SK-N-SH (cell line): ENCODE measurements at regions of chr1 and their contacts with region 1.

Region 1: GRCh38 chr1:201970334-201971159 is 11.9 kb upstream of the RNPEP start:
- DNase-seq: peak; percentile 62
- H3K4me3 ChIP-seq: no peak overlapping the region
- H3K27ac ChIP-seq: no peak overlapping the region
- H3K4me1 ChIP-seq: no peaks in the 10 kb centered on the region; a peak in 1 of 4 replicates
- H3K27me3 ChIP-seq: no peaks in the 10 kb centered on the region
- CTCF ChIP-seq: no peak
- EP300 ChIP-seq: peak in 1 of 2 experiments; percentile 84; a peak in 2 of 4 replicates
- RAD21 ChIP-seq: no peak

Region 2: GRCh38 chr1:201660931-201661822 is 309.4 kb before region 1 on chr1:
- CTCF ChIA-PET with region 1: no interaction called
- POLR2A ChIA-PET with region 1: no interaction called
- DNase-seq: no peak
- H3K4me3 ChIP-seq: no peak overlapping the region
- H3K27ac ChIP-seq: no peak overlapping the region
- H3K4me1 ChIP-seq: peaks cover 10 to 16% of the 10 kb centered on the region in 2 experiments; a peak in 3 of 4 replicates
- H3K27me3 ChIP-seq: no peaks in the 10 kb centered on the region
- CTCF ChIP-seq: no peak
- EP300 ChIP-seq: no peak
- RAD21 ChIP-seq: no peak

Region 3: DNA sequence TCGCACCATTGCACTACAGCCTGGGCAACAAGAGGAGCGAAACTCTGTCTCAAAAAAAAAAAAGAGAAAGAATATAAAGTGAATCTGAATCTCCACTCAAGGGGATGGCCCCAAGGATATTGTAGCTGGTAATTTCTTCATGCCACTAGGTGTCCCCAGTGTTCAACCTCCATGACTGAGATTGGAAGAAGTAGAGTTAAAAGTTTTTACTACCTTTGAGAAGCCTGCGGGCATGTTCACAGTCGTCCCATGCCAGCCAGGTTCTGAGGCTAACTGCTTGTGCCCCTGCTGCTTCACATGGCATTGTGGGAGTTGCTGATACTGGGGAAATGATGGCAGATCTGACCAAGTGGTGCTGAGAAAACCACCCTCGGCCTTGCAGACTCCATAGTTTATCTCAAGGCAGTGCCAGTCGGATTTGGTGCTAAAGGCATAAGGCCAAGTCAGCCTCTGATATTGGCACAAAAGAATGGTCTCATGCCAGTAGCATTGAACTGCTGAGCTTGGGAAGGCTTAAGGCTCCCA is 92.6 kb before region 1 on chr1:
- CTCF ChIA-PET with region 1: interaction called, 32 read pairs
- POLR2A ChIA-PET with region 1: no interaction called
- DNase-seq: peak; percentile 46
- H3K4me3 ChIP-seq: peak overlapping the region in 1 of 2 experiments; percentile 24; a peak in 1 of 4 replicates
- H3K27ac ChIP-seq: no peak overlapping the region
- H3K4me1 ChIP-seq: peaks cover 3 to 8% of the 10 kb centered on the region in 2 experiments; a peak in 3 of 4 replicates
- H3K27me3 ChIP-seq: no peaks in the 10 kb centered on the region
- CTCF ChIP-seq: peak; percentile 73
- EP300 ChIP-seq: no peak
- RAD21 ChIP-seq: peak; percentile 67

Region 4: GRCh38 chr1:201883786-201884185 is 86.8 kb before region 1 on chr1:
- CTCF ChIA-PET with region 1: interaction called, 344 read pairs
- POLR2A ChIA-PET with region 1: interaction called, 3 read pairs
- DNase-seq: no peak
- H3K4me3 ChIP-seq: no peak overlapping the region
- H3K27ac ChIP-seq: peak overlapping the region; percentile 31 to 59; a peak in 3 of 4 replicates
- H3K4me1 ChIP-seq: peaks cover 20 to 45% of the 10 kb centered on the region in 2 experiments; a peak in 3 of 4 replicates
- H3K27me3 ChIP-seq: no peaks in the 10 kb centered on the region
- CTCF ChIP-seq: no peak
- EP300 ChIP-seq: no peak
- RAD21 ChIP-seq: no peak

Region 5: GRCh38 chr1:201904579-201904978 is 66.0 kb before region 1 on chr1:
- CTCF ChIA-PET with region 1: interaction called, 18 read pairs
- POLR2A ChIA-PET with region 1: no interaction called
- DNase-seq: no peak
- H3K4me3 ChIP-seq: no peak overlapping the region
- H3K27ac ChIP-seq: peak overlapping the region; percentile 71 to 88
- H3K4me1 ChIP-seq: peaks cover 5 to 33% of the 10 kb centered on the region in 2 experiments; a peak in 3 of 4 replicates
- H3K27me3 ChIP-seq: no peaks in the 10 kb centered on the region
- CTCF ChIP-seq: no peak
- EP300 ChIP-seq: peak in 1 of 2 experiments; percentile 76; a peak in 1 of 4 replicates
- RAD21 ChIP-seq: no peak

Region 6: DNA sequence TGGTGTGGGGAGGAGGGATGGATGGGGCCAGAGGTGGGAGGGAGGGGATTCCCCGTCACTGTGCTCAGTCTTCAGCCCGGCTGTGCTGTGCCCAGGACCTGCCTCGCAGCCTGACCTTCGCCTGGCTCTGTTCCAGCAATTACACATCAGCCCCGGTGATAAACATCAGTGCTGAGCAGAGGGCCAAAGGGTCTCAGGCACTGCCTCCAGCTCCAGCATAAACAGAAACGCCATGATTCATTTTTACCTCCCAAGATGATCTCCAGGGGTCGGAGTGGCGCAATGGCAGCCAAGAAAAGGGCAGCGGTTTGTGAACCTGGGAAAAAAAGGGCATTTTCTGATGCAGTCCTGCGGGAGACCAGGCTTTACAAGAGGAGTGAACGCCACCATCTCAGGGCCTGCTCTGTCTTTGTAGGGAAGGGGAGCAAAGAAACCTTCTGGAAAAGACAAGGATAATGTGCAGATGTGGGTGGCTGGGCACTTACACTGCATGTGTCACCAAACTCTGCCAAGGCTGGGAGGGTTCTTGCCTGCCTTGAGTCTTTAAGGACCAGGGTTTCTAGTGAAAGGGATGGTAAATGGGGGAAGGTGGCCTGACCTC is 53.8 kb before region 1 on chr1:
- CTCF ChIA-PET with region 1: interaction called, 12 read pairs
- POLR2A ChIA-PET with region 1: no interaction called
- DNase-seq: peak; percentile 84
- H3K4me3 ChIP-seq: no peak overlapping the region; a peak in 2 of 4 replicates
- H3K27ac ChIP-seq: peak overlapping the region; percentile 53 to 81
- H3K4me1 ChIP-seq: peaks cover 16 to 18% of the 10 kb centered on the region in 2 experiments
- H3K27me3 ChIP-seq: no peaks in the 10 kb centered on the region
- CTCF ChIP-seq: 0 out of 2 replicates have a peak, but pooled peaks have one; percentile 14
- EP300 ChIP-seq: peak; percentile 38 to 70; a peak in 3 of 4 replicates
- RAD21 ChIP-seq: no peak

Region 7: GRCh38 chr1:201928266-201928665 is 42.3 kb before region 1 on chr1:
- CTCF ChIA-PET with region 1: no interaction called
- POLR2A ChIA-PET with region 1: no interaction called
- DNase-seq: no peak
- H3K4me3 ChIP-seq: no peak overlapping the region
- H3K27ac ChIP-seq: no peak overlapping the region
- H3K4me1 ChIP-seq: no peaks in the 10 kb centered on the region
- H3K27me3 ChIP-seq: no peaks in the 10 kb centered on the region
- CTCF ChIP-seq: no peak
- EP300 ChIP-seq: no peak
- RAD21 ChIP-seq: no peak

Region 8: GRCh38 chr1:201982623-201983379 is 12.3 kb after region 1 on chr1 and contains the start of gene RNPEP:
- CTCF ChIA-PET with region 1: interaction called, 29 read pairs
- POLR2A ChIA-PET with region 1: no interaction called
- DNase-seq: peak; percentile 82
- H3K4me3 ChIP-seq: peak within 1 kb of the TSS; percentile 67 to 69
- H3K27ac ChIP-seq: peak within 1 kb of the TSS; percentile 66 to 78
- H3K4me1 ChIP-seq: peaks cover 0 to 8% of the 10 kb centered on the region in 2 experiments; a peak in 2 of 4 replicates
- H3K27me3 ChIP-seq: no peaks in the 10 kb centered on the region
- CTCF ChIP-seq: peak; percentile 22; the same call in 1 of the 2 replicates
- EP300 ChIP-seq: no peak
- RAD21 ChIP-seq: no peak
- polyA plus RNA-seq, gene RNPEP: 36.7 and 46.7 TPM in 2 replicates

Region 9: DNA sequence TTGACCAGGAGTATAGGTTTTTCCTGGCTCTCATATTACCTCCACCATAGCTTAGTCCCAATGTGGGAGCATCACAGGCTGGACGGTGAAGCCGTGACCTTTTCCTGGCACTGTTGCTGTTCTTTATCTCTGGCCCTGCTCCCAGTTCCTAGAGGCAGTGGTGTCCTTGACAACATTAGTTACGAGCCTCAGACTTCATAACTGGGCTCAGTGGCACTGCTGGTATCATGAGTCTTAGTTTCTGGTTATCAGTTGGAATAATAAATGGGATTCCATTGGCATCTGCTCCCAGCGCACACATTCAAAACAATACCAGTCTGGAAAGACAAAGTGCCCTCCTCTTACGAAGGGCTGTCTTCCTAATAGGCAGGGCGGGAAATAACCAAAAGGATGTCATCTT is 19.9 kb after region 1 on chr1:
- CTCF ChIA-PET with region 1: interaction called, 12 read pairs
- POLR2A ChIA-PET with region 1: no interaction called
- DNase-seq: peak; percentile 62
- H3K4me3 ChIP-seq: no peak overlapping the region
- H3K27ac ChIP-seq: no peak overlapping the region
- H3K4me1 ChIP-seq: peaks cover 0 to 7% of the 10 kb centered on the region in 2 experiments; a peak in 1 of 4 replicates
- H3K27me3 ChIP-seq: no peaks in the 10 kb centered on the region
- CTCF ChIP-seq: no peak
- EP300 ChIP-seq: no peak
- RAD21 ChIP-seq: no peak